ENCODE measurements at regions of chrX and their contacts with region 1.

Region 1: GRCh38 chrX:72126539-72127140 is 5.1 kb downstream of the RTL5 start:
- DNase-seq: peak; percentile 80 to 82 (median 81)
- H3K4me3 ChIP-seq: peak overlapping the region in 1 of 3 experiments; percentile 7
- H3K4me3 Mint-ChIP-seq: peak overlapping the region; percentile 58 to 67
- H3K27ac ChIP-seq: peak overlapping the region; percentile 71 to 97
- H3K27ac Mint-ChIP-seq: peak overlapping the region; percentile 80 to 98 (median 93)
- H3K4me1 ChIP-seq: peaks cover 97 to 98% of the 10 kb centered on the region in 2 donors
- H3K4me1 Mint-ChIP-seq: peaks cover 92% of the 10 kb centered on the region
- H3K27me3 ChIP-seq: no peaks in the 10 kb centered on the region
- H3K27me3 Mint-ChIP-seq: peaks cover 0 to 41% (median 0%) of the 10 kb centered on the region in 3 donors
- CTCF ChIP-seq: peak; percentile 68

Region 2: DNA sequence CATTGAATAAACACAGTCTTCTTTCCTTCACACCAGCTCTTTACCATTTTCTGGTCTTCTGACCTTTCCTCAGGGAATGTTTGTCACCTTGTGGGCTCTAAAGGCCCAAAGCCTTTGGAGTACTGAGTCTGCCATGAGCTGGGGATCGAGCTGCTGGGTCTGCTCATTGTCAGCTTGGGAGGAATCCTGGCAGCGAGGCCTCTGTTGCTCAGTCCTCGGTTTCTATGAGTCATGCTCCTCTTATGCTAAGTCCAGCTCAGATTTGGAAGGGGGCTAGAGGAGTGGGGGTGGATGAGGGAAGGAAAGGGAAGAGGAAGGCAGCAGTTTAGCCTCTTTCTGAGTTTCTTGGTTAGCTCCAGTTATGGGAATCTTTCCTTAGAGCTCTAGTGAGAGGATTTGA is 184.9 kb before region 1 on chrX:
- intact Hi-C with region 1: no loop called
- DNase-seq: no peak
- H3K4me3 ChIP-seq: no peak overlapping the region
- H3K4me3 Mint-ChIP-seq: no peak overlapping the region
- H3K27ac ChIP-seq: no peak overlapping the region
- H3K27ac Mint-ChIP-seq: no peak overlapping the region
- H3K4me1 ChIP-seq: no peaks in the 10 kb centered on the region
- H3K4me1 Mint-ChIP-seq: no peaks in the 10 kb centered on the region
- H3K27me3 ChIP-seq: peaks cover 0 to 3% of the 10 kb centered on the region in 2 donors
- H3K27me3 Mint-ChIP-seq: peaks cover 0 to 8% (median 5%) of the 10 kb centered on the region in 3 donors
- CTCF ChIP-seq: no peak

Region 3: DNA sequence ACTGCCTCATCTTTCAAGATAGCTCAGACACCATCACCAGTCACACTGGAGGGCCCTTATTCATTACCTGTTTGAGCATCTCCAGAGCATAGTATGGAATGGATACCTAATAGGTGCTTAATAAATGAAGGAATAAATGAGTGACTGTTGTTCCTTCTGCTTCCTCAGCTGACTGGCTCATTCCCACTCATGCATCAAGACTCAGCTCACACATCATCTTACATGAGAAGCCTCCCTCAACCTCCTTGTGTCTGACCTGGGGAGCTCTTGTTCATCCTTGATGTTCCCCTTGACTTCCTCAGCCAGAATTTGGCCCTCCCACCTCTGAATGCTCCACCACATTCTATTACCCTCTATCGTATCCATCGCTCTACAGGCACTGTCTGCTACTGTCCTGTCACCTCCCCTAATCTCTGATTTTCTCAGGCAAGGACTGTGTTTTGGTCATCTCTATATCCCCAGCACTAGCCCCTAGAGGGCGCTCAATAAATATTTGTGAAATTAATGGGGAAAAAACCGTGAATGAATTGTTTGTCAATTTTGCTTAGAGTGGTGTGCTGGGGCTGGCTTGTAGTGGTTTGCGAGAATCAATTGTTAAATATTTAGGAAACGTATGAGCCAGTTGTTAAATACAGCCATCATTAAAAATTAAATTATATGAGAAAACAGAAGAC is 127.7 kb before region 1 on chrX:
- intact Hi-C with region 1: loop called in 1 of 2 experiments (anchors 5 kb)
- DNase-seq: peak; percentile 22 to 54 (median 29)
- H3K4me3 ChIP-seq: no peak overlapping the region
- H3K4me3 Mint-ChIP-seq: no peak overlapping the region
- H3K27ac ChIP-seq: no peak overlapping the region
- H3K27ac Mint-ChIP-seq: peak overlapping the region in 1 of 7 donors; percentile 40
- H3K4me1 ChIP-seq: peaks cover 3% of the 10 kb centered on the region in 2 donors
- H3K4me1 Mint-ChIP-seq: peaks cover 3% of the 10 kb centered on the region
- H3K27me3 ChIP-seq: peaks cover 0 to 2% of the 10 kb centered on the region in 2 donors
- H3K27me3 Mint-ChIP-seq: peaks cover 0 to 24% (median 6%) of the 10 kb centered on the region in 3 donors
- CTCF ChIP-seq: peak; percentile 57

Region 4: DNA sequence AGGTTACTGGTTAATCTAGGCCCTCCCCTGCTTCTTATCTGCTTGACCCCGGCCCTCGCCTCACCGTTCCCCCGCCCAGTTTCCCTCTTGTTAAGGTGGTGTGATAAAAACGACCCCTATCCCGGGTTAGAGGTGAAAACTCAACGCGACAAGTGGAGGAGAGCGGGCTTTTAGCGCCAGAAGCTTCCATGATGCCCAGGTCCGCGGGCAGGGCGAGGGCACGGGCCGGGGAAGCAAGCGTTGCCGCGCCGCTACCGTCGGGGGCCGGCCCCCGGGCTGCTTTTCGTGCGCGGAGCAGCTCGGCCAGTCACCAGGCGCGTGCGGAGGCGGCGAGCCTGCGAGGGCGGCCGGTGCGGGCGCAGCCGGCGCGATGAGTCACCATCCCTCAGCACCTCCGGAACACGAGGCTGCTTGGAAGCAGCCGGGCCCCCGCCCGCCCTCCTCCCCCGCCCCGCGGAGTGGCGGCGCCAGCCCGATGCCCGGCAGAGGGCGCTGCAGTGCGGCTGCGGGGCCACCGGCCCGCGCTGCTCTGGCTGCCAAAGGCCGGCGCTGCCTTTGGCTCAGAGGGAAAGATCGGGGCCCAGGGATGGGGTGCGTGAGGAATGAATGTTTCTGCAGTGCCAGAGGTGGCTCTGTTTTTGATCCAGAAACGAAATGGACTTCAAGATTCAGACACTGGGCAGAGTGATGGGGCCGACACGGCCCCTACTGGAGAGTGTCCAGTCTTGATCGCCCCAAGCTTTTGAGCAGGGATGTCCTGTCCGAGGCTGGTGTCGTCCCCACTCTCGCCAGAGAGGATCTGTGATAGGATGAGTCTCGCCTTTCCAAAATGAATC is 108.1 kb before region 1 on chrX:
- intact Hi-C with region 1: loop called (anchors 2 to 5 kb)
- DNase-seq: peak; percentile 86 to 93 (median 89)
- H3K4me3 ChIP-seq: peak overlapping the region in 1 of 3 experiments; percentile 21
- H3K4me3 Mint-ChIP-seq: peak overlapping the region in 1 of 2 donors; percentile 37
- H3K27ac ChIP-seq: peak overlapping the region in 1 of 2 donors; percentile 55
- H3K27ac Mint-ChIP-seq: peak overlapping the region in 6 of 7 donors; percentile 42 to 86 (median 56)
- H3K4me1 ChIP-seq: peaks cover 18 to 25% of the 10 kb centered on the region in 2 donors
- H3K4me1 Mint-ChIP-seq: peaks cover 31% of the 10 kb centered on the region
- H3K27me3 ChIP-seq: peaks cover 4 to 24% of the 10 kb centered on the region in 2 donors
- H3K27me3 Mint-ChIP-seq: peaks cover 7 to 36% (median 17%) of the 10 kb centered on the region in 3 donors
- CTCF ChIP-seq: peak; percentile 71

Region 5: DNA sequence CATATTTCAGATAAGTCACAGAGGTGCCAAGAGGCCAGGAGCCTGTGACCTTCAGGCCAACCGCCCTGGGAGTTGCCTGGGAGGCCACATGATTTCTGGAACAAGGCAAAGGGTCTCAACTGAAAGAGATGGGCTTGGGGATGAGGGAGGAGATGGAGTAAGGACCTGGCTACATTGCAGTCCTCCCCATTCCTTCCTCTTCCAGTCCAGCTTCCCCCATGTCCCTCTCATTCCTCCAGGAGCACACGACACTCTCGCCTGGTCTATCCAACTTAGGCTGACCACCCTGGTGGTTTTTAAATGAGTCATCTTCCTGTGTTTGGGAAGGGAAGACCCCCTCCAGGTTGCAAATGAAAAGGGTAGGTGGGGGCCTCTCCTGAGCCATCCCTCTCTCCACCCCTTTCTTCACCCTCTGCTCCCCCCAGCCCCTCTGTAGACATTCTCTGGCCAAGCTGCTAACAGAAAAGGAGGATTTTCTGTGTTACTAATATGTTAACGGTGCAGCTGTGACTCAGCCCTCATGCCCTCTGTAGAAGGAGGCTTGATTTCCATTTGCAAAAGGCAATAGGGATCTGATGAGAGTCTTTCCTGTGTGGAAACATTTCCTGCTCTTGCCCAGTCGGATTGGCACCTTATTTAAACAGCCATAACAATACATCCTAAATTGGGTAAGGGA is 74.1 kb before region 1 on chrX:
- intact Hi-C with region 1: loop called in 1 of 2 experiments (anchors 10 kb)
- DNase-seq: peak in 1 of 3 donors; percentile 8
- H3K4me3 ChIP-seq: no peak overlapping the region
- H3K4me3 Mint-ChIP-seq: no peak overlapping the region
- H3K27ac ChIP-seq: no peak overlapping the region
- H3K27ac Mint-ChIP-seq: no peak overlapping the region
- H3K4me1 ChIP-seq: peaks cover 55 to 60% of the 10 kb centered on the region in 2 donors
- H3K4me1 Mint-ChIP-seq: peaks cover 57% of the 10 kb centered on the region
- H3K27me3 ChIP-seq: peaks cover 0 to 5% of the 10 kb centered on the region in 2 donors
- H3K27me3 Mint-ChIP-seq: peaks cover 0 to 22% (median 0%) of the 10 kb centered on the region in 3 donors
- CTCF ChIP-seq: no peak

Region 6: GRCh38 chrX:72060196-72060920 is 66.3 kb before region 1 on chrX:
- intact Hi-C with region 1: loop called (anchors 10 kb)
- DNase-seq: no peak
- H3K4me3 ChIP-seq: no peak overlapping the region
- H3K4me3 Mint-ChIP-seq: no peak overlapping the region
- H3K27ac ChIP-seq: no peak overlapping the region
- H3K27ac Mint-ChIP-seq: no peak overlapping the region
- H3K4me1 ChIP-seq: peaks cover 50 to 65% of the 10 kb centered on the region in 2 donors
- H3K4me1 Mint-ChIP-seq: peaks cover 65% of the 10 kb centered on the region
- H3K27me3 ChIP-seq: peaks cover 0 to 4% of the 10 kb centered on the region in 2 donors
- H3K27me3 Mint-ChIP-seq: peaks cover 0 to 16% (median 0%) of the 10 kb centered on the region in 3 donors
- CTCF ChIP-seq: no peak

Region 7: GRCh38 chrX:72107841-72108595 is 18.6 kb before region 1 on chrX:
- intact Hi-C with region 1: loop called in 1 of 2 experiments (anchors 2 kb)
- DNase-seq: peak; percentile 80 to 90 (median 88)
- H3K4me3 ChIP-seq: no peak overlapping the region
- H3K4me3 Mint-ChIP-seq: peak overlapping the region; percentile 9 to 45
- H3K27ac ChIP-seq: peak overlapping the region; percentile 84 to 89
- H3K27ac Mint-ChIP-seq: peak overlapping the region; percentile 84 to 98 (median 95)
- H3K4me1 ChIP-seq: peaks cover 70 to 85% of the 10 kb centered on the region in 2 donors
- H3K4me1 Mint-ChIP-seq: peaks cover 83% of the 10 kb centered on the region
- H3K27me3 ChIP-seq: no peaks in the 10 kb centered on the region
- H3K27me3 Mint-ChIP-seq: peaks cover 0 to 43% (median 0%) of the 10 kb centered on the region in 3 donors
- CTCF ChIP-seq: no peak

Region 8: DNA sequence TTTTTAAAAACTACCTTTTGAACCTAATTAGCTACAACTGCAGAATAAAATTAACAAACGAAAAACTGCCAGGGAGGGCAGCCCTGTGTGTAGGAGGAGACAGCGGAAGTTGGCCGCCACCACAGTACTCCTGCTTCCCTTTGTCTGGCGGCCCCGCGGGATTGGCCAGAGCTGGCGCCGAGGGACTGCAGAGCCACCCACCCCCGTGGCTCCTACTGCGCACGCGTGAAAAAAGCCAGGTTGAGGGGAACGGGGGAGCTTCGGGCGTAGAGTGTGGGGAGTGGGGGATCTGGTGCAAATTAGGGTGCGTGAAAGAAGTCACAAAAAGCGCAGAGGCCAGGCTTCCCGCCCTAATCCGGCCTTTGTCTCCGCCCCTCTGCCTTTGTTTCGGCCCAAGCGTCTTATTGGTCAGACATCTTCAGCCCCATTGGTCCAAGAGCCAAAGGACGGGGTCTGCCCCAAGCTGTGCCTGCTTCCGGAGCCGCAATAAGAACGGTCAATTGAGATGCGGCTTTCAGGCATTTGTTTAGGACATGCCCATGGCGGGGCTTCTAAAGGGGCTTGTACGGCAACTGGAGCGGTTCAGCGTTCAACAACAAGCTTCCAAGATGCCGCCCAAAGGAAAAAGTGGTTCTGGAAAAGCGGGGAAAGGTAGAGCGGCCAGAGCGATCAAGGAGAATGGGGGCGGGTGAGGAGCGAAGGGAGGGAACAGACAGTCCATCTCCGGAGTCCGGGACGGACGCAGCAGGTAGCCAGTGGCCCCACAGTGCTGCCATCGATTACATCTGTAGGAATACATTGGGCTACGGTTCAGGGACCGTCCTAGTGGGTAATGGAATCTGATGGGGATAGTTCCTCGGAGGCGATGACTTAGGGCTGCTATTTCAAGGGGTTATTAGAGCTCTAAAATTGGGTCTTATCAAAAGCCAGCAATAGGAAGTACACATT is 54.8 kb after region 1 on chrX and contains the start of gene PIN4:
- intact Hi-C with region 1: loop called in 1 of 2 experiments (anchors 10 kb)
- DNase-seq: peak; percentile 87 to 90 (median 89)
- H3K4me3 ChIP-seq: peak within 1 kb of the TSS; percentile 75 to 85 (median 80)
- H3K4me3 Mint-ChIP-seq: no peak within 1 kb of the TSS
- H3K27ac ChIP-seq: peak within 1 kb of the TSS; percentile 73 to 74
- H3K27ac Mint-ChIP-seq: no peak within 1 kb of the TSS
- H3K4me1 ChIP-seq: peaks cover 14 to 21% of the 10 kb centered on the region in 2 donors
- H3K4me1 Mint-ChIP-seq: peaks cover 2% of the 10 kb centered on the region
- H3K27me3 ChIP-seq: no peaks in the 10 kb centered on the region
- H3K27me3 Mint-ChIP-seq: peaks cover 0 to 5% (median 0%) of the 10 kb centered on the region in 3 donors
- CTCF ChIP-seq: no peak
- polyA plus RNA-seq, gene PIN4: 2.9 to 20.8 (median 16.7) TPM